ENCODE measurements at regions of chr14 and their contacts with region 1.

Region 1: DNA sequence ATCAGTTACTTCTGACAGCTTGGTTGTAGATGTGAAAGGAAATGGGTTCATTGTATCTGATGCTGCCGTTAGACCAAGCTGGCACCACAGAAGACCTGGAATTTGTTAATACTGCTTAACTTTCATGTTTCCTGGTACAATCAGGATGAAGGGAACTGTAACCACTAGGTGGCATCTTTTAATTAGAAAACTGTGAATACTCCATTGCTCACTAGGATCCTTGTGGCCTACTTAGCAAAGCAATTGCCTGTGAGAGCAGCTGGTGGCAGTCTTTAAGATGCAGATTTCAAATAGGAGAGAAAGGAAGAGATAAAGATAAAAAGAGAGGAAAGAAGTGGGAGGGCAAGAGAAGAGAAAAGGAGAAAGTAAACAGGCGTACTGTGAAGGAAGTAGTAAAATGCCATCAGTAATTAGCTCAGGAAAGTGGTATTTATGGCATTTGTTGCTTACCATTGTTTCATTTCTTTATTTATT is 114.5 kb downstream of the RAD51B start:
- DNase-seq: no peak
- H3K4me3 ChIP-seq: no peak overlapping the region
- H3K27me3 ChIP-seq: no peaks in the 10 kb centered on the region
- CTCF ChIP-seq: peak; percentile 65

Region 2: GRCh38 chr14:67919259-67920032 is 14.6 kb before region 1 on chr14:
- CTCF ChIA-PET with region 1: interaction called, 19 read pairs
- POLR2A ChIA-PET with region 1: no interaction called
- DNase-seq: no peak
- H3K4me3 ChIP-seq: no peak overlapping the region
- H3K27me3 ChIP-seq: no peaks in the 10 kb centered on the region
- CTCF ChIP-seq: no peak

Region 3: DNA sequence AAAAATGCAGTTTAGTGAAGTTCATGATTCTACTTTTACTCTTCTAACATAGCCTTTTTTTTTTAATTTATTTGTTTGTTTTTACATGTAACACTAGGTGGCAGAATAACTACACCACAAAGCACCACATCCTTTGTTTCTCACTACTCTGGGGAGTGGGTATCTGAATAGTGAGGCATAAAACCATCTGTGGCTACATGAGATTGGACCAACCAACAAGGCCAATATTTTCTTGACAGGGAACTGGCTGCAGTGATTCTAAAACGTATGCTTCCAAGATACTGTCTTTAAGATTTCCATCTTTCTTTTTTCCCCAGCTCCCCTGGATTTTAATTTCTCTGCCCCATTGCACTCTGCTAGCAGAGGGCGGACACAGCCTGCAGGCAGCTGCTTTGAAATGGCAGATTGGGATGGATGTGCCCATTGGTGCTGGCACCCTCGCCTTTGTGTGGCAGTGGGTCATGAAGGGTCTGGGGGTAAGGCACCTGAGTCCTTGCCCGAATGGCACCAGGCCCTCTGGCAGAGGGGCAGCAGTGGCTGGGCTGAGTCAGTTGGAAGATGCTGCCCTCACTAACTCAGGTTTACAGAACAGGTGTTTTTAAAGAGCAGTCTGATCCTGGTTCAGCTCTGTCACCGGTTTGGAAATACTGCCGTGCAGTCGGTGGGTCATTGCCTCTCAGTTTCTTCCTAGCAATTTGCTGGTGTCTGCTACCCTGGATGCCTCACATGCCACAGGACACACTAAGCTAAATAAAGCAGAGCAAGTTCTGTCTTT is 314.6 kb after region 1 on chr14:
- CTCF ChIA-PET with region 1: interaction called, 10 read pairs
- POLR2A ChIA-PET with region 1: no interaction called
- DNase-seq: no peak
- H3K4me3 ChIP-seq: no peak overlapping the region
- H3K27me3 ChIP-seq: no peaks in the 10 kb centered on the region
- CTCF ChIP-seq: peak; percentile 53